ENCODE measurements at regions of chr11 and their contacts with region 1.

Region 1: GRCh38 chr11:16820324-16821092 is 82.1 kb downstream of the C11orf58 start:
- DNase-seq: peak; percentile 79 to 88
- H3K4me3 ChIP-seq: no peak overlapping the region
- H3K4me3 Mint-ChIP-seq: peak overlapping the region; percentile 9
- H3K27ac Mint-ChIP-seq: peak overlapping the region; percentile 58
- H3K4me1 ChIP-seq: peaks cover 26% of the 10 kb centered on the region
- H3K4me1 Mint-ChIP-seq: peaks cover 26% of the 10 kb centered on the region
- H3K27me3 ChIP-seq: no peaks in the 10 kb centered on the region
- H3K27me3 Mint-ChIP-seq: no peaks in the 10 kb centered on the region
- CTCF ChIP-seq: peak; percentile 83 to 91

Region 2: GRCh38 chr11:16528639-16529038 is 291.9 kb before region 1 on chr11:
- CTCF ChIA-PET with region 1: no interaction called
- POLR2A ChIA-PET with region 1: no interaction called
- intact Hi-C with region 1: no loop called
- DNase-seq: no peak
- H3K4me3 ChIP-seq: no peak overlapping the region
- H3K4me3 Mint-ChIP-seq: no peak overlapping the region
- H3K27ac Mint-ChIP-seq: no peak overlapping the region
- H3K4me1 ChIP-seq: no peaks in the 10 kb centered on the region
- H3K4me1 Mint-ChIP-seq: peaks cover 9% of the 10 kb centered on the region
- H3K27me3 ChIP-seq: no peaks in the 10 kb centered on the region
- H3K27me3 Mint-ChIP-seq: no peaks in the 10 kb centered on the region
- CTCF ChIP-seq: no peak

Region 3: DNA sequence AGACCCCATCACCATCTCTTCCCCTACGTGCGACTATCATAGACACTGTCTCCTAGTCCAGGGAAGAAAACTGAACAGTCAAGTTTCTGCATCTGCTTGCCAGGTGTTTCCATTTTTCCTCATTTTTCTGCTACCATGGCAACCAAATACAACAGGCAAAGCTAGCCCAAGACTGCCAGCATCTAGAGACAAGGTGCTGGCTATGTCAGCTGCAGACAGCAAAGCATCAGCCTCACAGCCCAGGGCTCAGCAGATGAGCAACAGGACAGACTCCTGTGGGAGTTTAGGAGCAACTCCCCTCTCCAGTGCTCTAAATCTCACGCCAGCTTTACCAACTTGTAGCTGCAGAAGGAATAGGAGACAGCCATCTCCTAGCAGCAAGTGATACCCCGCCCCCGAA is 42.2 kb after region 1 on chr11:
- CTCF ChIA-PET with region 1: interaction called, 3 read pairs
- POLR2A ChIA-PET with region 1: no interaction called
- intact Hi-C with region 1: loop called (anchors 1 kb)
- DNase-seq: peak in 1 of 2 experiments; percentile 30
- H3K4me3 ChIP-seq: no peak overlapping the region
- H3K4me3 Mint-ChIP-seq: no peak overlapping the region
- H3K27ac Mint-ChIP-seq: peak overlapping the region; percentile 67
- H3K4me1 ChIP-seq: peaks cover 55% of the 10 kb centered on the region
- H3K4me1 Mint-ChIP-seq: peaks cover 53% of the 10 kb centered on the region
- H3K27me3 ChIP-seq: no peaks in the 10 kb centered on the region
- H3K27me3 Mint-ChIP-seq: no peaks in the 10 kb centered on the region
- CTCF ChIP-seq: no peak

Region 4: DNA sequence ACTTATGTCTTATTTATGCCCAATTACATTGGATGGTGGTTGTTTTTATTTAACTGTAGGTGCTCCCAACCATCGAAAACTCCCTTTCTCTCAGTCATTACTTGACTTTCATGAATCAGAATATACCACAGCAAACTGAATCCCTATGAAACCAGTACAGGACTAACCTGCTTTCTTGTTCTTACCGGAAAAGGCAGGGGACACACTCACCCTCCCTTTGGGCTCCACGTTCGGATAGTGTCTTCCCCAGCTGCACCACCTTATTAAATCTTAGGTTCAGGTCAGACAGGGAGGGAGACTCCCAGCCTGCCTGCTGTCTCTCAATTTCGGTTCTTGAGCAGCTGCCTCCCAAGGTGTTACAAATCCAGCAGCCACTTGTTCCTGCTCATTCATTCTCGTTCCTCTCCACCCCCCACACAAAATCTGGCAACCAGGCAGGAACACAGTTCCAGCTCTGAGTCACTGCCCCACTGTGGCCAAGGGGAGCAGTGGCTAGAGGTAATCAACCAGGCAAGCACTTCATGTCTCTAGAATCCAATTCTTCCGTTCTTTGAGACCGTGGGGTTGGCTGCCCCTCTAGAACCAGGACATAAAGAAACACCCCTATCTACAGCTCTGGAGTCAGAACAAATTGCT is 60.7 kb after region 1 on chr11:
- CTCF ChIA-PET with region 1: interaction called, 11 read pairs
- POLR2A ChIA-PET with region 1: no interaction called
- intact Hi-C with region 1: loop called (anchors 1 kb)
- DNase-seq: peak in 1 of 2 experiments; percentile 44
- H3K4me3 ChIP-seq: no peak overlapping the region
- H3K4me3 Mint-ChIP-seq: no peak overlapping the region
- H3K27ac Mint-ChIP-seq: peak overlapping the region; percentile 31
- H3K4me1 ChIP-seq: peaks cover 17% of the 10 kb centered on the region
- H3K4me1 Mint-ChIP-seq: peaks cover 32% of the 10 kb centered on the region
- H3K27me3 ChIP-seq: no peaks in the 10 kb centered on the region
- H3K27me3 Mint-ChIP-seq: no peaks in the 10 kb centered on the region
- CTCF ChIP-seq: peak; percentile 21 to 47

Region 5: DNA sequence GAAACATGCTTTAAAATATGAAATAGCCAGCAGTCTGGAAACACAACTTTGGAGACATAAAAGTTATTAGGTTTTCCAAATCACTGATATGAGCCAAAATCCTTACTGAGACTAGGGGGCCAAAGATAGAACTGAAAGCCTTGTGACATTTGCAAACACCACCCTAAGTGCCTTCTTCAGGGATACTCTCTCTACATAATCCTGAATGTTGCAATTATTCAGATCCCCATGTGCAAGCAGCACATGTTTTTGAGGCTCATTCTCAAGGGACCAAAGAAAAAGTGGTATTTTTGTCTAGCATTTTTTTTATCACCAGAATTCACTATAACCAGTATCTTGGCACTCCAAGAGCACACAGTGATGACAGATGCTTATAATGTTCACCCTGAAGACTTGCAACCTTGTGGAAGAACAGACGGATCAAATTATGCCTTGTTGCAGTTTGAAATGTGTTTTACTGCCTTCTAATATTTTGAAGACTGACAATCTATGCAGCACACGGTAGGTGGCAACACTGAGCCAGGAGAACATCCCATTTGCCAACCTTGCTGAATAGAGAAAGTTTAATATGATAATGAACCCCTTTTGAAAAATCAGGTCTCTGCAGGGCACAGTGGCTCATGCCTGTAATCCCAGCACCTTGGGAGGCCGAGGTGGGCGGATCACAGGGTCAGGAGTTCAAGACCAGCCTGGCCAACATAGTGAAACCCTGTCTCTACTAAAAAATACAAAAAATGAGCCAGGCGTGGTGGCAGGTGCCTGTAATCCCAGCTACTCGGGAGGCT is 115.2 kb after region 1 on chr11:
- CTCF ChIA-PET with region 1: interaction called, 12 read pairs
- POLR2A ChIA-PET with region 1: no interaction called
- intact Hi-C with region 1: loop called (anchors 1 kb)
- DNase-seq: no peak
- H3K4me3 ChIP-seq: no peak overlapping the region
- H3K4me3 Mint-ChIP-seq: no peak overlapping the region
- H3K27ac Mint-ChIP-seq: no peak overlapping the region
- H3K4me1 ChIP-seq: peaks cover 10% of the 10 kb centered on the region
- H3K4me1 Mint-ChIP-seq: peaks cover 12% of the 10 kb centered on the region
- H3K27me3 ChIP-seq: no peaks in the 10 kb centered on the region
- H3K27me3 Mint-ChIP-seq: no peaks in the 10 kb centered on the region
- CTCF ChIP-seq: peak; percentile 29 to 68